Activated CD4-positive, alpha-beta memory T cell treated with anti-CD3 and anti-CD28 coated beads for 36 hours (primary cell): ENCODE measurements at regions of chr22 and their contacts with region 1.

Region 1: DNA sequence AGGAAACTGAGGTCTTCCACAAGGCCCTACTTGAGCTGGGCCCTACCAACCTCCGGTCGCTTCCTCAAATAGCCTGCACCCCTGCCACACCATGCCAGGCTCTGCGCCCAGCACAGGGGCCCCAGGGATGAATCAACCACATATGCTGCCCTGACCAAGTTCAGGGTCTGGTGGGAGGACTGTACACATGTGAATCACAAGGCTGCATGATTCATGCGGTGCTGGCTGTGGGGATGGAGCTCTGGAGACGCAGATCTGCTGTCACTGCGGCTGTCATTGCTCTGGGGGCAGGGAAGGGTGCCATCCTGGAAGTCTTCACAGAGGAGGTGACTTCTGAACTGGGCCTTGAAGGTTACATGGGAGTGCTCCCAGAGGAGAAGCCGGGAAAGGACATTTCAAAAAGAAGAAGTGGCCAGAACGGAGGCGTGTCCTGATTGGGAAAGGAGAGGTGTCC is 21.5 kb downstream of the CYTH4 start:
- DNase-seq: peak; percentile 90
- H3K4me3 Mint-ChIP-seq: no peak overlapping the region
- H3K27ac Mint-ChIP-seq: peak overlapping the region; percentile 91
- H3K4me1 Mint-ChIP-seq: peaks cover 89% of the 10 kb centered on the region
- H3K27me3 Mint-ChIP-seq: no peaks in the 10 kb centered on the region

Region 2: DNA sequence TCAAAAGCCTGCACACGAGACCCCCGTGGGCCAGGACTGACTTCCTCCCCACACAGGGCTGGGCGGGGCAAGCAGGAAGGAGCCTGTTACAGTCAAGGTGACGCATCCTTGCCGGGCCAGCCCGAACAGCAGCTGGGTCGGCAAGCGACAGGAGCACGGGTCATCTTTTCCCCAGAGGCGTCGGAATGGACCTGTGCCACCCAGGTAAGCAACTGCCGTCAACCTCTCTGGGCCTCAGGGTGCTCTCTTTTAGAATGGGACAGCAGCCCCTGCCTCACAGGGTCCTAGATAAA is 21.5 kb before region 1 on chr22 and contains the start of gene CYTH4:
- CTCF ChIA-PET with region 1: no interaction called
- POLR2A ChIA-PET with region 1: interaction called, 6 read pairs
- intact Hi-C with region 1: loop called (anchors 1 kb)
- DNase-seq: peak; percentile 89
- H3K4me3 Mint-ChIP-seq: peak within 1 kb of the TSS; percentile 82
- H3K27ac Mint-ChIP-seq: peak within 1 kb of the TSS; percentile 94
- H3K4me1 Mint-ChIP-seq: peaks cover 48% of the 10 kb centered on the region
- H3K27me3 Mint-ChIP-seq: peaks cover 2% of the 10 kb centered on the region
- total RNA-seq, gene CYTH4: 58.7 to 60.5 TPM

Region 3: GRCh38 chr22:37328017-37328416 is 24.2 kb after region 1 on chr22:
- CTCF ChIA-PET with region 1: no interaction called
- POLR2A ChIA-PET with region 1: no interaction called
- intact Hi-C with region 1: no loop called
- DNase-seq: no peak
- H3K4me3 Mint-ChIP-seq: no peak overlapping the region
- H3K27ac Mint-ChIP-seq: no peak overlapping the region
- H3K4me1 Mint-ChIP-seq: peaks cover 2% of the 10 kb centered on the region
- H3K27me3 Mint-ChIP-seq: peaks cover 39% of the 10 kb centered on the region